Astrocyte of the cerebellum (primary cell): ENCODE measurements at regions of chr1 and their contacts with region 1.

Region 1: GRCh38 chr1:25997828-25998761 is at the start of gene PAFAH2:
- DNase-seq: peak; percentile 100
- H3K4me3 ChIP-seq: peak within 1 kb of the TSS; percentile 61
- CTCF ChIP-seq: peak; percentile 94

Region 2: DNA sequence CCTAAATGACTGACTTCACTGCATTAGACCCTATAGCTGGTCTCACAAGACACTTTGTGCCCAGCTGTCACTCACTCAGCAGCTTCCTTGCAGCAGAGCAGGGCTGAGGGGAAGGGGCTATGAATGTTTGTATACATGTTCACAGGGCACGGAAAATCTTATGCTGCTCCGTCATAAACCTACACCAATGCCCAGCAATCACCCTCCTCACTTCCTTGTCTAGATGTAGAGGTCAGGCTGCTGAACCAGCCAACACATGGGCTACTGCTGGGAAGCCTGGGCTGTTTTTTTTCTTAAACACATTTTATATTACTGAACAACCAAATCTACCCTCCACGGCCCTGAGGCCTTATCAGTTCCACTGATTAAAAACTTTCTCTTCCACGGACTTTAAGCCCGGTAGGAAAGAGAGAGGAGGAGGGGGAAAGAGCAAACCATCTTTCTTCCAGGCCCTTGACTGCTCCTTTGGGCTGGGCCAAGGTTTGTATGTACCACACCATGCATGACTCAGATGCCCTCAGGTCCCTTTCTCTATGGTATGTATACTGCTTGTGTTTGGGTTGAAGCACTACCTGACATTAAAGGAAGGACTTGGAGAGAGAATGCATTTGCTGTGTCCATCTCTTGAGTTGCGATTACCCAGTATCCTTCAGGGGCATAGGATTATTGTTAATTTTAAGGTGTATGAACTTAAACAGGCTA is 165.6 kb before region 1 on chr1:
- in situ Hi-C with region 1: loop called (anchors 5 kb)
- DNase-seq: no peak
- H3K4me3 ChIP-seq: no peak overlapping the region
- CTCF ChIP-seq: no peak

Region 3: DNA sequence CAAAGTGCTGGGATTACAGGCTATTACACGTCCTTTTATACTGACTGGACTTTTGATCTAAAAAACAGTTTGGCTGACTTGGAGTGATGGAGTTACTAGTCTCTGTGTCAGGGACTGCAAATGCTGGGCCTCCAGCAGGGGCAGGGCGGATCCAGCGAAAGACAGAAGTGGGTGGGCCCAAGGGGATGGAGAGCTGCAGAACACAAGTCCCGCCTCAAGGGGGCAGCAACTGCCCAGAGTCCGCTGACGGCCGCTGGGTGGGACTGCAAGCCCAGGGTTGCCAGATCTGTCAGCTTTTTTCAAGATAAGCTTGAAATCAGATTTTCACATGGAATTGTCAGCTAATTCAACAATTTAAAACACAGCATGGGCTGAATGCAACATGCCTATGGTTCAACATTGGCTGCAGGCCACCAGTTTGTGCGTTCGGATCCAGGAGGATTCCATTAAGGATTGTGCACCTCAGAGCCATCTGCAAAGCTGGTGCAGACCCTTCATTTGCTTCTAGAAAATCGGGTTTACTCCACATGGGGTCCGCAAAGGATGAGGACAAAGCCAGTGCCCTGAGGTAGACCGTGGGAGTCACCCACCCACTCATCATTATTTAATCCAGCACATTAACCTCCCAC is 102.6 kb before region 1 on chr1:
- in situ Hi-C with region 1: loop called (anchors 5 kb)
- DNase-seq: peak; percentile 85
- H3K4me3 ChIP-seq: no peak overlapping the region
- CTCF ChIP-seq: peak; percentile 98

Region 4: DNA sequence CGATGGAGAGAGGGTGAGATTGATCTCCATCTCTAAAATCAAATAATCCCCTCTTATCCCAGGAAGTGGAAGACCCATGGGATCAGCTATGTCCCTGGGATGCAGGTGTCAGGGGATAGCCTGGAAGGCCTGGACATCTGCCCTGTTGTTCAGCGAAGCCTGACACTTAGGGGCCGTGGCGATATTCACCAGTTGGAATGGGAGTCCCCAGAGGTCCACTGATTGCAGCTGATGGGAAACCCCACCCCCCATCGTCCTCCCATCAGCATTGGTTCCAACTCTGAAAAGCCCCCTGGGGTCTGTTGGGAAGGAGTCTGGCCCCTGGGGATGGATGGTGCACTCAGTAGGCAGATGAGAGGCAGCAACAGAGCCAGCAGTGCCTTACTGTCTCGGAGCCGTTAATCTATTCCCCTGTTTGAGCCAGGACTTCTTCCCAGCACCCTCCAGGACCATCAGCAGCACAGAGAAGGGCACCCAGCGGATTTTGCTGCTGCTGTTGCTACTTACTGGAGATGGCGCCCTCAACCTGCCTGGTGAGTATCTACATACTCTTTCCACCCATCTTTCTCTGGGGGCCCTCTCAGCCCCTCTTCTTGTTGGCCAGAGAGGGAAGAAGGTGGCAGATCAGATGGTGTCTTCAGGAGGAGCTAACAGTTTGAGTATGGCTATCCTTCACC is 205.7 kb after region 1 on chr1:
- in situ Hi-C with region 1: no loop called
- DNase-seq: no peak
- H3K4me3 ChIP-seq: no peak overlapping the region
- CTCF ChIP-seq: no peak